ENCODE measurements at regions of chr9 and their contacts with region 1.

Region 1: DNA sequence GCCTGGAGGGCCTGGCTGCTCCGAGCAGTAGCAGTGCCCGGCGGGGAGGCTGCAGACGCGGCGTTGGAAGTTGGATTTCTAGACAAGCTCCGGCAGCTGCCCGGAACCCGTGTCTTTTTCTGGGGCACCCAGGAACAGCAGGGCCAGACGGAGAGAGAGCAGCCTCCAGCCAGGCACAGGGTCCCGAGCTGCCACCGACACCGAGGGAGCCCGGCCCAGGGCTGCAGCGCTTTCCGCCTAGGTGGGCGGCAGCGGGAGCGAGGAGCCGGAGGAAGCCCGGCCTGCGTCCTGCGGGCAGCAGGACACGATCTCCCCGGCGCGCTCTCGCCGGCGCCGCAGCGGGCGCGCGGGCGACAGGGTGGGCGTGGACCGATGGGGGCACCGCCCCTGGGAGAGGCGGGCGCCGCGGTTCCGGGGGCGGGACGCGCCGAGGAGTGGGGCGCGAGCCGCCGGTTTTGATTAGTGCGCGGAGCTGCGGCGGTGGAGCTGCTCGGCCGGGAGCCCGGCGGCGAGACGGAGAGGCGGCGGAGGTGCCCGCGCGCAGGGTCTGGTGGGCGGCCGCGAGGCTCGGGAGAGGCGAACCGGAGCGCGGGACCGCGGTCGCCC is at the start of gene UGCG:
- DNase-seq: peak; percentile 97
- H3K4me3 Mint-ChIP-seq: peak within 1 kb of the TSS; percentile 96
- H3K27ac Mint-ChIP-seq: peak within 1 kb of the TSS; percentile 88
- H3K4me1 Mint-ChIP-seq: peaks cover 22% of the 10 kb centered on the region
- H3K27me3 Mint-ChIP-seq: no peaks in the 10 kb centered on the region
- total RNA-seq, gene UGCG: 19.9 and 22.4 TPM in 2 replicates

Region 2: DNA sequence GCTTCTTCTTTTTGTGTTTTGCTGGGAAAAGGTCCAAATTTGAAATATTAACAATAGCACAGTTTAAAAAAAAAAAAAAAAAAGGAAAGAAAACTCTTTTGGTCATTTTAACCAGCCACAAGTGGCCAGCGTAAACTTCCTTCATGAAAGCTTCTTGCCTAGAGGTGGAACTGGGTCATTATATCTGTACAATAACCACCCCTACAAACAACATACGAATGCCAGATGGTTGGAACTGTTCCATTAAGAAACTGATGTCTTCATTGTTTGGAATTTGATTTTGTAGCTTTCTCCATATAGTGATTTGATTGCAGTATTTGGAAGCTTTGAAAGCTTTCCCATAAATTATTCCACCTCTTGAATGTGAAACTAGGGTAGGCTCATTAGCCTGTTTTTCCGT is 839.9 kb before region 1 on chr9:
- intact Hi-C with region 1: no loop called
- DNase-seq: no peak
- H3K4me3 Mint-ChIP-seq: no peak overlapping the region
- H3K27ac Mint-ChIP-seq: no peak overlapping the region
- H3K4me1 Mint-ChIP-seq: no peaks in the 10 kb centered on the region
- H3K27me3 Mint-ChIP-seq: no peaks in the 10 kb centered on the region

Region 3: GRCh38 chr9:111542497-111543254 is 353.8 kb before region 1 on chr9:
- intact Hi-C with region 1: no loop called
- DNase-seq: no peak
- H3K4me3 Mint-ChIP-seq: no peak overlapping the region
- H3K27ac Mint-ChIP-seq: no peak overlapping the region
- H3K4me1 Mint-ChIP-seq: no peaks in the 10 kb centered on the region
- H3K27me3 Mint-ChIP-seq: no peaks in the 10 kb centered on the region

Region 4: DNA sequence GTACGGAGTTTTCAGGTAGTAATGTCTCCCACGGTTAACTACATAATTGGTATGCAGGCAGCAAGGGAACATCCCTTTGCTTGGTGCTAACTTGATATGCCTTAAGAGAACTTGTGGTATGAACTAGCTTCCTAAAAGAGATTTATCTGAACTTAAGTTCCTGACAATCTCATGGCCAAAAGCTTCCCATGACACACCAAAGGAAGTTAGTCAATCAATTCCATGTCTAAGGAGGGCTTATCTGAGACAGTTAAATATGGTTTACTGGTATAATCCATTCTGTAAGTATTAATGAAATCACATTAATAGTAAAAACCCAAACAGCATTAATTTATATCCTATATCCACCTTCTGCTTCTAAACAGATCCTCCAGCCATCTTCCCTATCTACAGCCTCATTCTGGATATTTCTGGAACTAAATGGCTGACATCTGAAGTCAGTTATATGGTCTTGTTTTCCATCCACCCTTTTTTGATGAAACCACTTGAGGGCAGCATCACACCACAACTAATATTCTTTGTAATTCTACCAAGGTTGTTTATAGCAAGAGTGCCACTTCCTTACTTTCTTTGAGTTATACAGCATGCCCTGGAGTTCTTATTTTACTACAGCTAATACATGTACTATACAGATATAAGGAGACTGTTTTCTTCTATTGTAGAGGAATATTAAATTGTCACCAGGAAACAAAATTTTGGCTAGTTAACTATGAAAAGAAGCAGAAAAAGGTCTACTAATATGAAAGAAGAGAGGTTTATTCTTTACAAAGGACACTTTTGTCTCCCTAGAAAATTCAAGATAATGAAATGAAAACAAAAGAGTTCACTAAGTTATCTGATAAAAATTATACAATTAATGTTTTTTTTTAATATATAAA is 136.5 kb before region 1 on chr9:
- intact Hi-C with region 1: loop called (anchors 10 kb)
- DNase-seq: peak; percentile 87
- H3K4me3 Mint-ChIP-seq: no peak overlapping the region
- H3K27ac Mint-ChIP-seq: no peak overlapping the region
- H3K4me1 Mint-ChIP-seq: no peaks in the 10 kb centered on the region
- H3K27me3 Mint-ChIP-seq: no peaks in the 10 kb centered on the region

Region 5: DNA sequence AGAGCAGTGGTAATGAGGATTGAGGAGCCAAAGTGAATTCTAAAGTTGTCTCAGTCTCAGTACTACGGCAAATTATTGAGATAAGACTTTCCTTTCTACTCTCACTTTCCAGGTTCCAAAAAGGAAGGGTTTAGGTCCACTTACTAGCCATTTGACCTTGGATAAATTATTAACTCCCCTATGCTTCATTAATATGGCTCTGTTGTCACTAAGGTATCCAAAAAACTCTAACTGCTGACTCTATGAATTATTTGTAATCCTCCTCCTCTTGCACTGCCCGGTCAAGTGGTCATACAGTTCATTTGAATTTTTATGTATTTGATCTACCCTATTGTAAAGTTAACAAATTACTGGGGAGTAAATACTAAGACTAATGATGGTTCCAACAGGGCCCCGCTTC is 17.5 kb before region 1 on chr9:
- intact Hi-C with region 1: no loop called
- DNase-seq: no peak
- H3K4me3 Mint-ChIP-seq: no peak overlapping the region
- H3K27ac Mint-ChIP-seq: no peak overlapping the region
- H3K4me1 Mint-ChIP-seq: no peaks in the 10 kb centered on the region
- H3K27me3 Mint-ChIP-seq: peaks cover 22% of the 10 kb centered on the region

Region 6: GRCh38 chr9:111910428-111910827 is 14.0 kb after region 1 on chr9:
- intact Hi-C with region 1: loop called (anchors 1 kb)
- DNase-seq: no peak
- H3K4me3 Mint-ChIP-seq: peak overlapping the region; percentile 0
- H3K27ac Mint-ChIP-seq: peak overlapping the region; percentile 2
- H3K4me1 Mint-ChIP-seq: peaks cover 54% of the 10 kb centered on the region
- H3K27me3 Mint-ChIP-seq: no peaks in the 10 kb centered on the region

Region 7: GRCh38 chr9:111937781-111938426 is 41.4 kb after region 1 on chr9:
- intact Hi-C with region 1: loop called (anchors 1 kb)
- DNase-seq: peak; percentile 84
- H3K4me3 Mint-ChIP-seq: peak overlapping the region; percentile 45
- H3K27ac Mint-ChIP-seq: peak overlapping the region; percentile 83
- H3K4me1 Mint-ChIP-seq: peaks cover 22% of the 10 kb centered on the region
- H3K27me3 Mint-ChIP-seq: peaks cover 2% of the 10 kb centered on the region

Region 8: GRCh38 chr9:112037281-112038016 is 141.0 kb after region 1 on chr9:
- intact Hi-C with region 1: loop called (anchors 1 kb)
- DNase-seq: peak; percentile 92
- H3K4me3 Mint-ChIP-seq: peak overlapping the region; percentile 52
- H3K27ac Mint-ChIP-seq: peak overlapping the region; percentile 88
- H3K4me1 Mint-ChIP-seq: peaks cover 45% of the 10 kb centered on the region
- H3K27me3 Mint-ChIP-seq: peaks cover 17% of the 10 kb centered on the region

Region 9: DNA sequence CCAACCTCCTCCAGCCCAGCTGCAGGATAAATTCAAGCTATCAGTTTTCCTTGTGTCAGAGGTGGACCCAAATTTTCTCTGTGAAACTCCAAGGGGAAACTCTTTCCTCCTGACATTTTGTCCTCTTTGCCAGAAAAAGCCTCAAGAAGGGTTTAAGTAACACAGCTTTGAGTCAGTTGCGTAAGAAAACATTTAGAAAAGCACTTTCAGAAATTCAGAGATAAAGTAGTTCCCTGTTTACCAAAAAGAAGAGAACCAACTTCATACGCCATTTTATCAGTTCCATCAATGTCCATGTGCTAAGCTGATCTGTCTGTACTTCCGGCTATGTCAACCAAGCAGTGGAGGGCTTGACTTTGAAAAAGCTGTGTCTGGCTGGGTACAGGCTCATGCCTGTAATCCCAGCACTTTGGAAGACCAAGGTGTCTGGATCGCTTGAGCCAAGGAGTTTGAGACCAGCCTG is 298.5 kb after region 1 on chr9:
- intact Hi-C with region 1: no loop called
- DNase-seq: no peak
- H3K4me3 Mint-ChIP-seq: no peak overlapping the region
- H3K27ac Mint-ChIP-seq: no peak overlapping the region
- H3K4me1 Mint-ChIP-seq: peaks cover 3% of the 10 kb centered on the region
- H3K27me3 Mint-ChIP-seq: no peaks in the 10 kb centered on the region

Region 10: GRCh38 chr9:112379177-112380101 is 483.0 kb after region 1 on chr9:
- intact Hi-C with region 1: loop called (anchors 1 kb)
- DNase-seq: peak; percentile 100
- H3K4me3 Mint-ChIP-seq: peak overlapping the region; percentile 100
- H3K27ac Mint-ChIP-seq: peak overlapping the region; percentile 100
- H3K4me1 Mint-ChIP-seq: peaks cover 42% of the 10 kb centered on the region
- H3K27me3 Mint-ChIP-seq: no peaks in the 10 kb centered on the region

Measured in activated CD4-positive, alpha-beta T cell treated with anti-CD3 and anti-CD28 coated beads, Interleukin-2, amount 10 ng/mL, durations not matched to agents 24 days and 14 days (primary cell).